ENCODE measurements at regions of chr6 and their contacts with region 1.

Region 1: DNA sequence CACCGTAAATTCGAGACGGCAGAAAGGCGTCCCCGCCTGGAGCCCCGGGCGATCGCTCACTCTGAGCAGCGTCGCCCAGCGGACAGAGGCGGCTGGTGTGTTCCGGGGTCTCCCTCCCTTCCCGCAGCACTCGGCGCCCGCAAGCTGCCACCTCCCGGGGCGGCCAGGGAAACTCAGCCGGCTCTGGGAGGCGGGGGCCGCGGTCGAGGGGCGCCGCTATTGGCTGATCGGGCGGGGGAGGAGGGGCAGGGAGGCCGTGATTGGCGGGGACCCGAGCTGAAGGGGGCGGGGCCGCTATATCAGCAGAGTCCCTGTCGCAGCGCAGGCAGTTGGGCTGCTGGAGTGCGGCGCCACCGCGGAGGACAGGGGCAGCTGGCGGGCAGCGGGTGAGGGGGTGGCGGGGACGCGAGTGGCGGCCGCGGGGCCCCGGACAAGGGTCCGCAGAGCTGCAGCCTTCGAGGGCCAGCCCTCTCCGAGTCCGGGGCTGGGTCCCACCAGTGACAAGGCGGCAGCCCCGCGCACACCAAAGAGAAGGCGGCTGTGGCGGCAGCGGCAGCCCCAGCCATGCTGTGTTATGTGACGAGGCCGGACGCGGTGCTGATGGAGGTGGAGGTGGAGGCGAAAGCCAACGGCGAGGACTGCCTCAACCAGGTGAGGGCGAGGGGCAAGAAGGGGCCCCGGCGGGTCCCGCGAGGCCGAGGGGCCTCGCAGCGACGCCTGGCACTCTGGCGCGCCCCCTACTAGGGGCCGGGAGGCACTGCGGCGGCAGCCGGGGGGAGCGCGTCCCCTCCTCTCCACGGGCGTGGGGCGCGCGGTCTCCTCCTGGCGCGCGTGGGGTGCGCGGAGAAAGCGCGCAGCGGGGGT is at the start of gene MYLIP:
- DNase-seq: no peak
- ATAC-seq: peak; percentile 94
- H3K4me3 ChIP-seq: peak within 1 kb of the TSS; percentile 83 to 92
- H3K27ac ChIP-seq: peak within 1 kb of the TSS; percentile 92
- H3K4me1 ChIP-seq: peaks cover 19% of the 10 kb centered on the region
- H3K27me3 ChIP-seq: peaks cover under 1% of the 10 kb centered on the region
- CTCF ChIP-seq: peak; percentile 83
- total RNA-seq, gene MYLIP: 12.7 TPM

Region 2: GRCh38 chr6:15662326-15663129 is 466.5 kb before region 1 on chr6 and contains the start of gene DTNBP1:
- CTCF ChIA-PET with region 1: no interaction called
- POLR2A ChIA-PET with region 1: interaction called, 19 read pairs
- in situ Hi-C with region 1: no loop called
- intact Hi-C with region 1: no loop called
- DNase-seq: no peak
- ATAC-seq: peak; percentile 97
- H3K4me3 ChIP-seq: peak within 1 kb of the TSS; percentile 64 to 84
- H3K27ac ChIP-seq: peak within 1 kb of the TSS; percentile 85
- H3K4me1 ChIP-seq: peaks cover 7% of the 10 kb centered on the region; the same call in 1 of the 2 replicates
- H3K27me3 ChIP-seq: peaks cover 3% of the 10 kb centered on the region; the same call in 1 of the 2 replicates
- CTCF ChIP-seq: no peak
- total RNA-seq, gene DTNBP1: 29.3 TPM

Region 3: DNA sequence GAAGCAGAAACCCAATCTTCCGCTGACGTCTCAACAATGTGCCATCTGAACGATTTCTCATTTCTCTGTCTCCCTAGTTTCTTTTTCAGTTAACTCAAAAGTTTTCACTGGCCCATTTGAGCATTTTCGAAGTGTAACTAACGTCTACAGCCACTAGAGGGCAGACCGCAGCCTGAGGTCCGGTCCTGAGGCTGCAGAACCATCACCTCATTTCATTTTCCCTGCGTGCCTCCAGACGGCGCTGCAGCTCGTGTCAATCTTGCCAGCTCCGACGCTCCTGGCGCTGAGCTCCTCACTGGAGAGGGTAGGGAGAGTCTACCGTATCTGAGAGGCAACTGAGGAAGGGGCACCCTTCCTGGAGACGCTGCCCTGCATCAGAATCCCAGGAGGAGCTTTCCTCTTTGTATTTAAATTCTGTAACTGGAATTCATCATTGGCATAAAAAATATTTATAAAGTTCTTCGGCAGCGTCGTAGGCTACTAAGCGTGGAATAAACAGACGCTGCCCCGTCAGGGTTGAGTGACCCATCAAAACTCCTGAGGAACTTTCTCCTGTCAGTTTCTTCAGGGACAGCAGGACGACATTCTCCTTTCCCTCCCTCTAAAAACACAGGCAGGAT is 437.6 kb before region 1 on chr6:
- CTCF ChIA-PET with region 1: interaction called, 12 read pairs
- POLR2A ChIA-PET with region 1: interaction called, 4 read pairs
- in situ Hi-C with region 1: no loop called
- intact Hi-C with region 1: loop called (anchors 1 kb)
- DNase-seq: peak; percentile 75
- ATAC-seq: peak; percentile 100
- H3K4me3 ChIP-seq: peak overlapping the region; percentile 37 to 64
- H3K27ac ChIP-seq: peak overlapping the region; percentile 58; the same call in 1 of the 2 replicates
- H3K4me1 ChIP-seq: peaks cover 3% of the 10 kb centered on the region; the same call in 1 of the 2 replicates
- H3K27me3 ChIP-seq: peaks cover under 1% of the 10 kb centered on the region; the same call in 1 of the 2 replicates
- CTCF ChIP-seq: peak; percentile 100

Region 4: GRCh38 chr6:15824811-15825210 is 304.2 kb before region 1 on chr6:
- CTCF ChIA-PET with region 1: no interaction called
- POLR2A ChIA-PET with region 1: interaction called, 13 read pairs
- in situ Hi-C with region 1: no loop called
- intact Hi-C with region 1: no loop called
- DNase-seq: no peak
- ATAC-seq: no peak
- H3K4me3 ChIP-seq: no peak overlapping the region
- H3K27ac ChIP-seq: no peak overlapping the region
- H3K4me1 ChIP-seq: no peaks in the 10 kb centered on the region
- H3K27me3 ChIP-seq: peaks cover 7% of the 10 kb centered on the region; the same call in 1 of the 2 replicates
- CTCF ChIP-seq: no peak

Region 5: DNA sequence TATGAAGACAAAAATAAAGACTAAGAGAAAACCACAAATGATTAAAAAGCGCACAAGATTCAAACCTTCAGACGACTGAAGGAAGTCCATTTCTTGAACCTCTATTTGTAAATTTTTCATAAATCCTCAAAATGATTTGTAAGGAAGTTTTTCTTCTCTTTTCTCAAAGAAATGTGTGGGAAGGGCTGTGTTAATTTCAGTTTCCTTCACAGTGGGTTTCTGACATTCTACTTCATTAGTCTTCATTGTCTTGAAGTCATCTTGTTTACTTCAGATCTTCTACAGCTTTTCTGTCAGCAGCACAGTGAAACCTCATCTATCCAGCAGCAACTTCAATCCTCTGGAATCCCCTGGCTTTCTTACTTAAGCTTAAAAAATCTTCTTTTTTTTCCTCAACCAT is 87.7 kb before region 1 on chr6:
- CTCF ChIA-PET with region 1: no interaction called
- POLR2A ChIA-PET with region 1: no interaction called
- in situ Hi-C with region 1: no loop called
- intact Hi-C with region 1: no loop called
- DNase-seq: no peak
- ATAC-seq: no peak
- H3K4me3 ChIP-seq: no peak overlapping the region
- H3K27ac ChIP-seq: no peak overlapping the region
- H3K4me1 ChIP-seq: no peaks in the 10 kb centered on the region
- H3K27me3 ChIP-seq: no peaks in the 10 kb centered on the region
- CTCF ChIP-seq: no peak

Region 6: DNA sequence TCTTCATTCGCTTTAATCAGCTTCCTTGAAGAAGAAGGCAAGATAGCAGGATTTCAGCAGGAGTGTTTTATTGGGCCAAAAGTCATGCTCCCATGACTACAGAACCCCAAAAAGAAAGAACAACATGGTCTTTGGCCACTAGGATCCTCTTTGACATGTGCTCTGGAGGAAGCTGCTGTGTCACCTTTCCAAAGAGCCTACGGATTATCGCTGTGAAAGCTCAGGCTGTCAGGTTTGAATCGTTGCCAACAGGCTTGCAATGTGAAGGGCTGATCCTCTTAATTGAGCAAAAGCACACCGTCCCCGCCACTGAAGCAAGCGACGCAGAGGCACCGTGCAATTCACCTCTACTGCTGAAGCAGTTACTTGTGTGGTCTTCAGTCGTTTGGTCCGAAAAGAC is 28.9 kb after region 1 on chr6:
- CTCF ChIA-PET with region 1: no interaction called
- POLR2A ChIA-PET with region 1: interaction called, 12 read pairs
- in situ Hi-C with region 1: no loop called
- intact Hi-C with region 1: no loop called
- DNase-seq: no peak
- ATAC-seq: no peak
- H3K4me3 ChIP-seq: no peak overlapping the region
- H3K27ac ChIP-seq: no peak overlapping the region
- H3K4me1 ChIP-seq: no peaks in the 10 kb centered on the region
- H3K27me3 ChIP-seq: no peaks in the 10 kb centered on the region
- CTCF ChIP-seq: no peak

Region 7: GRCh38 chr6:16168858-16169257 is 39.9 kb after region 1 on chr6:
- CTCF ChIA-PET with region 1: no interaction called
- POLR2A ChIA-PET with region 1: no interaction called
- in situ Hi-C with region 1: no loop called
- intact Hi-C with region 1: no loop called
- DNase-seq: no peak
- ATAC-seq: no peak
- H3K4me3 ChIP-seq: no peak overlapping the region
- H3K27ac ChIP-seq: no peak overlapping the region
- H3K4me1 ChIP-seq: no peaks in the 10 kb centered on the region
- H3K27me3 ChIP-seq: peaks cover 34% of the 10 kb centered on the region
- CTCF ChIP-seq: peak; percentile 59

Region 8: GRCh38 chr6:16183187-16183664 is 54.2 kb after region 1 on chr6:
- CTCF ChIA-PET with region 1: interaction called, 6 read pairs
- POLR2A ChIA-PET with region 1: no interaction called
- in situ Hi-C with region 1: no loop called
- intact Hi-C with region 1: loop called (anchors 5 kb)
- DNase-seq: no peak
- ATAC-seq: no peak
- H3K4me3 ChIP-seq: no peak overlapping the region
- H3K27ac ChIP-seq: no peak overlapping the region
- H3K4me1 ChIP-seq: peaks cover 4% of the 10 kb centered on the region; the same call in 1 of the 2 replicates
- H3K27me3 ChIP-seq: peaks cover 2% of the 10 kb centered on the region
- CTCF ChIP-seq: peak; percentile 73

Region 9: GRCh38 chr6:16249971-16250370 is 121.0 kb after region 1 on chr6:
- CTCF ChIA-PET with region 1: no interaction called
- POLR2A ChIA-PET with region 1: no interaction called
- in situ Hi-C with region 1: no loop called
- intact Hi-C with region 1: no loop called
- DNase-seq: no peak
- ATAC-seq: no peak
- H3K4me3 ChIP-seq: no peak overlapping the region
- H3K27ac ChIP-seq: no peak overlapping the region
- H3K4me1 ChIP-seq: no peaks in the 10 kb centered on the region
- H3K27me3 ChIP-seq: no peaks in the 10 kb centered on the region
- CTCF ChIP-seq: no peak

Region 10: GRCh38 chr6:17086469-17086868 is 957.5 kb after region 1 on chr6:
- CTCF ChIA-PET with region 1: no interaction called
- POLR2A ChIA-PET with region 1: no interaction called
- in situ Hi-C with region 1: no loop called
- intact Hi-C with region 1: no loop called
- DNase-seq: peak; percentile 57
- ATAC-seq: peak; percentile 94
- H3K4me3 ChIP-seq: no peak overlapping the region
- H3K27ac ChIP-seq: no peak overlapping the region
- H3K4me1 ChIP-seq: no peaks in the 10 kb centered on the region
- H3K27me3 ChIP-seq: peaks cover 6% of the 10 kb centered on the region; the same call in 1 of the 2 replicates
- CTCF ChIP-seq: peak; percentile 83

Measured in Panc1 (cell line).